ENCODE measurements at regions of chr13 and their contacts with region 1.

Region 1: DNA sequence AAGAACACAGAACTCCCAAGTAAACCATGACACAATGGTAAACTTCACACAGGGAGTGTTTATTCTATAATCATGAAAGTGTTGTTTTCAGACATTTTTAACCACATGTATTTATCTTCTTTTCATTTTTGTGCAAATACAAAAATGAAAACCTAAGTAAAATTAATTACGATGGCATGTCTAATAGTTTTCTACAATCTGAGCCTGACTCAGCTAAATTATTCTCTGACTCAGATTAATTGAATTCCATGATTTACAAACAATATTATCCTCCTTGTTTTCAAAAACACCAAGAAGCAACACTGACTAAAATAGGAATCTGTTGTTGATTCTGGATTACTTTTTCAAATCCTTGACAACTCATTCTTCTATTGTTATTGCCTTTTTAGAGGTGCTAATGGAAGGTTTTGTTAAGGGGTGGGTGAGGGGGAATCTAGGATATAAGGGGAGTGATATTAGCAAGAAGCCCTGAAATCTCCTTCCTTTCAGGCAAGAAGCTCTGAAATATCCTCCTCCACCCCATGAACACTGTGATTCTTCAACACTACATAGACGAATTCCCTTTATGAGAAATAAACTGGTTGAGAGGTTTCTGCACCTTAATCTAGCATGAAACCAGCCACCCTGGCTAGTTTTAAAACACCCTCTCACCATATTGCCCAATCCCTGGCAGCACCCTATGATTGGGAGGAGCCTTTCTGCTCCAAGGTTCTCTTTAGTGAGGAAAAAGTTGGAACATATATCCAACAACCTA is 1057.7 kb upstream of the PCDH20 start:
- DNase-seq: no peak
- ATAC-seq: no peak
- H3K4me3 ChIP-seq: no peak overlapping the region
- H3K27ac ChIP-seq: no peak overlapping the region
- H3K4me1 ChIP-seq: no peaks in the 10 kb centered on the region
- H3K27me3 ChIP-seq: no peaks in the 10 kb centered on the region
- CTCF ChIP-seq: no peak

Region 2: DNA sequence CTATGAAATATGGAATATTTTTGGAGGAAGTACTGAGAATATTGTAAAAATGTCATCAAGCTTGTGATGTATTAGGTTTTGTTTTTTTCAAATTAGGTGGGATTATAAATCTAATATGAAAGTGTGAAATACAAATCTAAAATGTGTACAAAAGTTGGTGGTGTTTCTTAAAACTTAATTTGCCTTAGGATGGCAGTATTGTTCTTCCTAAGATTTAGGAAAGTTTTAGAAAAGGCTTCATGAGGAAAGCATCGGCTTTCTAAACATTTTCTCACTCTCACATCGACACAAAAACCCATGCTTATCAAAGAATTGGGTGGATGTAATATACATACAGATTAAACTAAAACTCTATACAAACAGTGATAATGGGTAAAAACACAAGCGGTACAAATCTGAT is 85.7 kb before region 1 on chr13:
- CTCF ChIA-PET with region 1: no interaction called
- POLR2A ChIA-PET with region 1: no interaction called
- intact Hi-C with region 1: no loop called
- DNase-seq: peak; percentile 29
- ATAC-seq: no peak; the same call in 1 of the 2 replicates
- H3K4me3 ChIP-seq: no peak overlapping the region
- H3K27ac ChIP-seq: no peak overlapping the region
- H3K4me1 ChIP-seq: no peaks in the 10 kb centered on the region
- H3K27me3 ChIP-seq: no peaks in the 10 kb centered on the region
- CTCF ChIP-seq: peak; percentile 46; the same call in 1 of the 2 replicates

Region 3: DNA sequence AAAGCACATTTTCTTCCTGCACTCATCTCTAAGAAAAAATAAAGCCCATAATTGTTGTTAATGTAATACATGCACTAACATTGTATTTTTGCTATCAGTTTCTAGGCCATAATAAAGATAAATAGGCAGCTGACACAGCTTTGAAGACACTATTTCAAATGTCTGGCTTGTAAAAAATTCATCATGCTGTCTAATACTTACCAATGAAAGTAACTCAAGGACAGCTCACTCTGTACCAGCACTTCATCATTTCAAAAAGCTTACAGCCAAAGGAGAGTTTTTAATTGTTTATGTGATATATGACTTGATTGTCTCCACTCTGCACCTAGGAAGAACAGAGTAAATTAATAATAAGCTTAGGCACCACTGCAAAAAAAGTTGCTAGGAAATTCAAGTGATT is 365.6 kb after region 1 on chr13:
- CTCF ChIA-PET with region 1: no interaction called
- POLR2A ChIA-PET with region 1: interaction called, 12 read pairs
- intact Hi-C with region 1: no loop called
- DNase-seq: no peak
- ATAC-seq: no peak
- H3K4me3 ChIP-seq: no peak overlapping the region
- H3K27ac ChIP-seq: no peak overlapping the region
- H3K4me1 ChIP-seq: peaks cover 5% of the 10 kb centered on the region
- H3K27me3 ChIP-seq: no peaks in the 10 kb centered on the region
- CTCF ChIP-seq: no peak